ENCODE measurements at regions of chr14 and their contacts with region 1.

Region 1: DNA sequence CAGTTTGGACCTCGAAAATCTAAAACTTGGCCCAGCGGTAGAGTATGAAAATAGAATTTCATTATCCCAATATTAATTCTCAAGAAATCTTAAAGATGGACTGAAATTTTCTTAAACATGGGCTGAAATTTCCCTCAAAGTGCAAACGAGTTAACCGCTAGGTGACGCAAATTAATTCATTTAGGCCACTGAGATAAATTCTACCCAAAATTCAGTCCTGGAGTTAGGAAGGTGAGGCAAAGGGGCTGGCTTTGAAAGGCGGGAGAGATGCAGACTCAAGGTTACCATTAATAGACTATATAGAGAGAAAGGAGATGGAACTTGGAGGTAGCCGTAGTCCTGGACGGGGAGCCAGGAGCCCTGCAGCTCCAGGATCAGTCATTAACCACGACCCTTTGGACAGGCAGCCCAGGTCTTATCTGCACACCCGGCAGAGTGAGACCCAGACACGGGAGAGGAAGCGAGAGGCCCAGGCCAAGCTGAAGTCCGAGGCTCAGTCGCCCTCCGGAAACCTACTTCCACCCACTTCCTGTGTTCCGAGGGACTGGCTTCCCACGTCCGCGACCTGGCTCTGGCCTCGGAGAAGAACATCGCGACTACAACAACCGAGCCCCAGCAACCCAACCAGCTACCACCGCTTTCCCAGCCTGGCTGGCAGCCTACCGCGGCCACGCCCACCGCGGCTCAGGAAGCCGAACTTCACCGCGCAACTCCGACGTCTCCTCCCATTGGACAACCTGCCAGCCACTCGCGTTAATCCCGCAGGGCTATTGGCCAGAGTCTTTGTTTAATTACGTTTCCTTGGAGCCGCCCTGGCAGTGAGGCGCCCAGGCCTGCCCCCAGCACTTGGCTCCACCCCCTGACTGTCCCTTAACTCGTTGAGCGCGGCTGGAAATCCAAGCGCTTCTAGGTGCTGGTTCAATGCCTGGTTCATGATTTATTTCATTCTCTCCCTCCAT is at the start of gene EFCAB11:
- DNase-seq: peak; percentile 100
- H3K4me3 ChIP-seq: peak within 1 kb of the TSS; percentile 39 to 73 (median 70)
- H3K27ac ChIP-seq: peak within 1 kb of the TSS; percentile 86
- H3K4me1 ChIP-seq: peaks cover 35% of the 10 kb centered on the region
- H3K27me3 ChIP-seq: no peaks in the 10 kb centered on the region
- CTCF ChIP-seq: peak; percentile 20 to 23
- POLR2A ChIP-seq: peak; percentile 87
- total RNA-seq, gene EFCAB11: 6.3 and 11.2 TPM in 2 replicates

Region 2: DNA sequence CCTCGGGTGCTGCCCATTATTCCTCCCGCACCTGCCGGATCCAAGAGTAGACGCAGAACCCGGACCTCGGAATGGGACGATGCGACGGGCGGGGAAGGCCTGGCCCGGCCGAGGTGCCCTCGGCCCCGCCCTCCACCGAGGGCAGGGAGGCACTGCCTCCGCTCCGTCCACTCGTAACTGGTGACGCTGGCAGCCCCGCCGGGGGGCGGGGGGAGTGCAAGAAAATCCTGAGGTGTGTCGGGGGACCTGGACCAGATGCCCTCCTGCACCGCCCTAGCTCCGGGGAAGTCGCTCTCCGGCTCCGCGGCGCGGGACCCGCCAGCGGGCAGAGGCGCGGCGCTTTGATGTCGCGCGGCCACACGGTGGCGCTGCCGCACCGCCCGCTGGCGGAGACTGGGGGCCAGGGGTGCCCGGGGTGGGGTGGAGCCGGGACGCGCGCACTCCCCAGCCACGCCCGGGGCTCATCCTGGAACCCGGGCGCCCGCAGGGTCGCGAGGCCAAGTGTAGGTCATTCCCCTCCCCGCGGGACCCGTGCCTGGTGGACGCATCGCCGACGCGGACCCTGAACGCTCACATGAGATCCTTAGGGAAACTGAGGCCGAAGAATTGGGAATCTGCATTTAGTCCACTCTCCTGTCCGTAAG is 927.1 kb before region 1 on chr14:
- CTCF ChIA-PET with region 1: interaction called, 3 read pairs
- POLR2A ChIA-PET with region 1: interaction called, 6 read pairs
- dilution Hi-C with region 1: no loop called
- intact Hi-C with region 1: loop called (anchors 1 kb)
- DNase-seq: peak; percentile 25
- H3K4me3 ChIP-seq: peak overlapping the region; percentile 40 to 65 (median 56)
- H3K27ac ChIP-seq: no peak overlapping the region
- H3K4me1 ChIP-seq: peaks cover 9% of the 10 kb centered on the region
- H3K27me3 ChIP-seq: peaks cover 25 to 39% of the 10 kb centered on the region in 2 experiments
- CTCF ChIP-seq: peak; percentile 74 to 88
- POLR2A ChIP-seq: no peak

Region 3: DNA sequence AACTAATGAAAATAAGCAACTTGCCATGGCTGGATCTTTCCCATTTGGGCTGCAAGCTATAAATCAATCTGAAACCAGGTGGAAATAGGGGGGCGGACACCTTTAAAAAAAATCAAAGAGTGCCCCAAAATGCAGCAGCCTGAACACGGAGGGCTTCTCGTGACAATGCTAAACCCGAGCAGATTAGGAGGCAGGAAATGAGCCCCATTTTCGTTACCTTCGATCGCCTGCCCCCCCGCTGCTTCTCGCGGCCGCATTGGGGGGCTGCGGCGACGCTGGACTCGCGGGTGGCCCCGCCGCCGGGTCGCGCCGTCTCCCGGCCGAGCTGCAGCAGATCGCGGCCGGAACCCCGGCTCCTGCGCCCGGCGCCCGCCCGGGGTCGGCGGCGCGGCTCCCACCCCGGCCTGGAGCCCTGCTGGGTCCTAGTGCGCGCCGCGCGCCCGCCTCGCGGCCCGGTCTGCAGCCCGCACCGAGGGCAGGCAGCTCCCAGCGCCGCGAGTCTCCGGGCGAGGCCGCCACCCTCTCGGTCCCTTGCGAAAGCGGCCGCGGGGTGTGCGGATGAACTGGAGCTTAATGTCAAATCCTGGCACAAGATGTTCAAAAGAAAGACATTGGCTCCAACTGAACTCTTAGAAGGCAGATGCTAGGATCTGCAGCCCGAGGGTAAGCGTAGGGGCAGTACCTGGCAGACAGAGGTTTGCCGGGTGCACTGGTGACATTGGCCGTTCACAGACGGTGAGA is 335.4 kb before region 1 on chr14:
- CTCF ChIA-PET with region 1: no interaction called
- POLR2A ChIA-PET with region 1: no interaction called
- dilution Hi-C with region 1: no loop called
- intact Hi-C with region 1: loop called (anchors 2 kb)
- DNase-seq: peak; percentile 61
- H3K4me3 ChIP-seq: peak overlapping the region; percentile 91 to 97 (median 94)
- H3K27ac ChIP-seq: peak overlapping the region; percentile 77
- H3K4me1 ChIP-seq: peaks cover 28% of the 10 kb centered on the region
- H3K27me3 ChIP-seq: no peaks in the 10 kb centered on the region
- CTCF ChIP-seq: no peak
- POLR2A ChIP-seq: peak; percentile 65

Region 4: GRCh38 chr14:89805501-89805900 is 148.8 kb before region 1 on chr14:
- CTCF ChIA-PET with region 1: no interaction called
- POLR2A ChIA-PET with region 1: no interaction called
- dilution Hi-C with region 1: no loop called
- intact Hi-C with region 1: no loop called
- DNase-seq: no peak
- H3K4me3 ChIP-seq: no peak overlapping the region
- H3K27ac ChIP-seq: no peak overlapping the region
- H3K4me1 ChIP-seq: peaks cover 3% of the 10 kb centered on the region
- H3K27me3 ChIP-seq: no peaks in the 10 kb centered on the region
- CTCF ChIP-seq: no peak
- POLR2A ChIP-seq: no peak

Region 5: GRCh38 chr14:89936658-89937185 is 17.6 kb before region 1 on chr14:
- CTCF ChIA-PET with region 1: interaction called, 93 read pairs
- POLR2A ChIA-PET with region 1: interaction called, 4 read pairs
- dilution Hi-C with region 1: no loop called
- intact Hi-C with region 1: loop called (anchors 1 kb)
- DNase-seq: no peak
- H3K4me3 ChIP-seq: no peak overlapping the region
- H3K27ac ChIP-seq: no peak overlapping the region
- H3K4me1 ChIP-seq: peaks cover under 1% of the 10 kb centered on the region
- H3K27me3 ChIP-seq: no peaks in the 10 kb centered on the region
- CTCF ChIP-seq: no peak
- POLR2A ChIP-seq: no peak

Region 6: GRCh38 chr14:90060312-90060964 is 106.1 kb after region 1 on chr14:
- CTCF ChIA-PET with region 1: interaction called, 5 read pairs
- POLR2A ChIA-PET with region 1: no interaction called
- dilution Hi-C with region 1: no loop called
- intact Hi-C with region 1: loop called (anchors 5 kb)
- DNase-seq: peak; percentile 54
- H3K4me3 ChIP-seq: peak overlapping the region; percentile 20 to 53 (median 46)
- H3K27ac ChIP-seq: no peak overlapping the region
- H3K4me1 ChIP-seq: peaks cover 27% of the 10 kb centered on the region
- H3K27me3 ChIP-seq: peaks cover 51 to 75% of the 10 kb centered on the region in 2 experiments
- CTCF ChIP-seq: peak; percentile 52 to 72
- POLR2A ChIP-seq: no peak

Region 7: DNA sequence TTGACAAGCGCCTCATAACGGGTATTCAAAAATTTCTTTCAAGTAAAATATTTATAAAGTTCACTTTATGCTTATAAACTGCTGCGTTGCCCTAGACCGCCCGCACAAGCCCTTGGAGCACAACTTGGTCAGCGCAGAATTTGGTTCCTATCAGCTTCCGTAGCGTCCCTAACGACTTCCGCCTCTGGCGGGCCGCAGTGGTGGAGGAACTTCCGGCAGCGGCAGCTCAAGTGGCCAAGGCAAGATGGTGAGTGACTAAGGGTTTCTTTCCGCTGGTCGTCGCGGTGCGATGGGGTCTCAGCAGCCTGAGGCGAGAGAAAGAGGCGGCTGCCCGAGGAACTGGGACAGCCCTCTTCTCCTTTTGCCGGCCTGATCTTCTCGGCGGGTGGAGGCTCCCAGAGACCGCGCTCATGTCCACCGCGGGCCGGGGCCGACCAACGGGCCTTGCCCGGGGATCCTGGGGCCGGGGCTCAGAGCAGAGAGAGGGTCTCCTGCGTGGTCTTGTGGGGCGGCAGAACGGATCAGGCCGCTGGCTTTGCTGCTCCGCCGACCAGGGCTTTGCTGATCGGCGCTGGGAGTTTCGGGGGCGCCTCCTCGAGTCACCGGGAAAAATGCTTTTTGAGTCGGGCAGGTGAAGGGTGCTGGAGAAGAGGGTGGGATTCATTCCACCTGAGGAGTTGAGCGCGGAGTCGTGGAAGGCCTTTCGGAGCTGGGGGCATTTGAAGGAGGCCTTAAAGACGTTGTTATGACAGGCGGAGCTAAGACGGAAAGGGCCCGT is 302.2 kb after region 1 on chr14 and contains the start of gene PSMC1:
- CTCF ChIA-PET with region 1: no interaction called
- POLR2A ChIA-PET with region 1: no interaction called
- dilution Hi-C with region 1: no loop called
- intact Hi-C with region 1: loop called (anchors 1 kb)
- DNase-seq: peak; percentile 95
- H3K4me3 ChIP-seq: peak within 1 kb of the TSS; percentile 50 to 95 (median 77)
- H3K27ac ChIP-seq: peak within 1 kb of the TSS; percentile 86
- H3K4me1 ChIP-seq: peaks cover 5% of the 10 kb centered on the region
- H3K27me3 ChIP-seq: peaks cover 0 to 2% of the 10 kb centered on the region in 2 experiments
- CTCF ChIP-seq: no peak
- POLR2A ChIP-seq: peak; percentile 84
- total RNA-seq, gene PSMC1: 129 and 132 TPM in 2 replicates

Region 8: DNA sequence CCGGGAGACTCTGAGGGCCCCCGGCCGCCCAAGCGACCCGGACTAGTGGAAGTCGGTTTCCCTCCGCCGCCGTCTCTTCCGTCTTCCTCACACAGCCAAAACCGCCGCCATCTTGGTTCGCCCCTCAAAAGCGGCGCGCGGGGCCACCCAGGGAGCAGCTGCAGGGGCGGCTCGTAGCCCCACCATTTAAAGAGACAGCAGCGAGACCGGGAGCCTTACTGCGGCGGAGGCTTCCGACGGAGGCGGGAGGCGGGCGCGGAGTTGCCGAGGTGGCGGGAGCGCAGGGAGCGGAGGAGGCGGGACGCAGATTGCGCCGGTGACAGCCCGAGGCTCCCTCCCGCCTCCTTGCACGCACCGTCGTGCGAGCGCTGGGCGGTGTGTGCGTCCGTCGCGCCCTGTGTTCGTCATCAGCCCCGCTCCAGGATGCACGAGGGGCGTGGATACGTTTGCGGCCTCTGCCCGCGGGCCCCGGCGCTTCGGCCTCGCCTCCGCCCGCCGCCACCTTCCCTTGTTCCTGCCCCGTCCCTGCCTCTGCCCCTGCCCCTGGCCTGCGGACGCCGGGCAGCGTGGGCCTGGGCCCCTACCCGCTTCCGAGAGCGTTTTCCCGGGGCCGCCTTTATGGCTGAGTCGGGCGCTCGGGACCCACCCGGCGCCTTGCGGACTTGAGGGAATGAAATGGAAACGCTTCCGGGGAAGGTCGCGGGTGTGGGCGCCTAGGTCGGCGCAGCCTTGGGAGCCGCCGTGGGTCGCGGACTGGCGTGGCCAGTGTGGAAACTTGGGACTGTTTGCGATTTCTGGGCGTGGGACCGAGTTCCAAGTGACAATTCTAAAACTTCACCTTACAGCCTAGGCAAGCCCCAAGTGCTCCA is 1556.1 kb after region 1 on chr14 and contains the start of gene PPP4R3A:
- CTCF ChIA-PET with region 1: no interaction called
- POLR2A ChIA-PET with region 1: no interaction called
- dilution Hi-C with region 1: no loop called
- intact Hi-C with region 1: loop called (anchors 1 kb)
- DNase-seq: peak; percentile 96
- H3K4me3 ChIP-seq: peak within 1 kb of the TSS; percentile 56 to 97 (median 85)
- H3K27ac ChIP-seq: peak within 1 kb of the TSS; percentile 83
- H3K4me1 ChIP-seq: peaks cover 17% of the 10 kb centered on the region
- H3K27me3 ChIP-seq: no peaks in the 10 kb centered on the region
- CTCF ChIP-seq: no peak
- POLR2A ChIP-seq: peak; percentile 89
- total RNA-seq, gene PPP4R3A: 77.0 and 83.5 TPM in 2 replicates

Measured in endothelial cell of umbilical vein (primary cell).